ENCODE measurements at regions of chr2 and their contacts with region 1.

Region 1: DNA sequence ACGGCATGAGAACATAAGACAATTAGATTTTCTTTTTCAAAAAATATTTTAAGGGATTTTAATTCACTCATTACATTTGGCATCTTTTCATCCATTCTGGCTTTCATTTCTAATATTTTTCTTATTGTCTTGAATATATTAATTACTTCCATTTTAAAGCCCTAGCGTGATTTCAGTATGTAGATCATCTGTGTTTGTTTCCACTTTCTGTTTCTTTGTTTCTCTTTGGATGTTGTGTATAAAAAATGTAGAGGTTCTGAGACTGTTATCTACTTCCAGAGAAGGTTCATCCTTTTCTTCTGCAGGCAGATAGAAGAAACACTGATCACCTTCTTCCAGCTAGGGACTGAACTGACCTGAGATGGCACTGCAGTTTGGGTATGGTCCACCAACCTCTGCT is 664.4 kb upstream of the SLC39A10 start:
- DNase-seq: no peak
- ATAC-seq: no peak
- H3K4me3 ChIP-seq: no peak overlapping the region
- H3K4me3 Mint-ChIP-seq: no peak overlapping the region
- H3K27ac ChIP-seq: no peak overlapping the region
- H3K27ac Mint-ChIP-seq: no peak overlapping the region
- H3K4me1 ChIP-seq: no peaks in the 10 kb centered on the region
- H3K4me1 Mint-ChIP-seq: no peaks in the 10 kb centered on the region
- H3K27me3 ChIP-seq: no peaks in the 10 kb centered on the region
- H3K27me3 Mint-ChIP-seq: no peaks in the 10 kb centered on the region

Region 2: DNA sequence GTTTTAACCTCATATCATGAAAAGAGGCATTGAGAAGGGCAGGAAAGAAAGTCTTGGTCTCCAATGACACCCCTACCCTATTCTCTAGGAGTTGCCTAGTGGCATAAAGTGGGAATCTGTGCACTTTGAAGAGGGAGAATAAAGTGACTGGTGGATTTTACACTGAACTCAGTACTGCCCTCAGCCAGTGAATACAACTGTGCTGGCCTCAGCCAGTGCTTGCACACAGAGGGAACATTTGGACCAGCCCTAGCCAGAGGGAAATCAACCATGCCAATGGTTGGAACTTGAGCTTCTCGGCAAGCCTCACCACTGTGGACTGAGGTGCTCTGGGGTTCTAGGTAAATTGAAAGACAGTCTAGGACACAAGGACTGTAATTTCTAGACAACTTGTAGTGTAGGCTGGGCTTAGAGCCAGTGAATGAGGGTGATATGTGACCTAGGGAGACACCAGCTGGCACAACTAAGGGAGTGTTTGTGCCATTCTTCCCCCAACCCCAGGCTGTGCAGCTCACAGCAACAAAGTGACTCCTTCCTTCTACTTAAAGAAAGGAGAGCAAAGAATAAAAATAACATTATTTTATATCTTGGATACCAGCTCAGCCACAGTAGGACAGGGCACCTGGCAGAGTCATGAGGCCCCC is 1107.4 kb before region 1 on chr2:
- CTCF ChIA-PET with region 1: no interaction called
- POLR2A ChIA-PET with region 1: no interaction called
- DNase-seq: no peak
- ATAC-seq: no peak
- H3K4me3 ChIP-seq: no peak overlapping the region
- H3K4me3 Mint-ChIP-seq: no peak overlapping the region
- H3K27ac ChIP-seq: no peak overlapping the region
- H3K27ac Mint-ChIP-seq: no peak overlapping the region
- H3K4me1 ChIP-seq: no peaks in the 10 kb centered on the region
- H3K4me1 Mint-ChIP-seq: no peaks in the 10 kb centered on the region
- H3K27me3 ChIP-seq: no peaks in the 10 kb centered on the region
- H3K27me3 Mint-ChIP-seq: no peaks in the 10 kb centered on the region

Region 3: DNA sequence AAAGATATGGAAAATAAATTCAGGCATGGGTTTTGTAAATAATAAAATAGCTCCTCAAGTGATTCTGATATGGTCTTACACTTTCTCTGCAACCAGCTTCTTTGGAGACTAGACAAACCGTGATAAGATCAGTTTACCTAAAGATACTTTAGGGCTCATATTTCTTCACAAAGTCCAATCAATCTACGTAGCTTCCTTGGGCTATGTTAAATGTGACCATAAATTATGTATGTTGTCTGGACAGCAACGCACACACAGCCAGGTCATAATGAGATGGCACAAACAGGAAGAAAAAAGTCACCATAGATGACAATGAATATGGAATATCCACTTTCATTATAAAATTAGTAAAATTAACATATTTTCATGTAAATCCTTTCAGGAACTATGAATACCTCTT is 24.1 kb before region 1 on chr2:
- CTCF ChIA-PET with region 1: no interaction called
- POLR2A ChIA-PET with region 1: interaction called in 1 of 2 experiments, 11 read pairs
- DNase-seq: no peak
- ATAC-seq: no peak
- H3K4me3 ChIP-seq: no peak overlapping the region
- H3K4me3 Mint-ChIP-seq: no peak overlapping the region
- H3K27ac ChIP-seq: no peak overlapping the region
- H3K27ac Mint-ChIP-seq: no peak overlapping the region
- H3K4me1 ChIP-seq: no peaks in the 10 kb centered on the region
- H3K4me1 Mint-ChIP-seq: no peaks in the 10 kb centered on the region
- H3K27me3 ChIP-seq: no peaks in the 10 kb centered on the region
- H3K27me3 Mint-ChIP-seq: no peaks in the 10 kb centered on the region